ENCODE measurements at regions of chr15 and their contacts with region 1.

Region 1: GRCh38 chr15:56491110-56491722 is 26.3 kb upstream of the MNS1 start:
- DNase-seq: peak; percentile 55 to 96 (median 78)

Region 2: DNA sequence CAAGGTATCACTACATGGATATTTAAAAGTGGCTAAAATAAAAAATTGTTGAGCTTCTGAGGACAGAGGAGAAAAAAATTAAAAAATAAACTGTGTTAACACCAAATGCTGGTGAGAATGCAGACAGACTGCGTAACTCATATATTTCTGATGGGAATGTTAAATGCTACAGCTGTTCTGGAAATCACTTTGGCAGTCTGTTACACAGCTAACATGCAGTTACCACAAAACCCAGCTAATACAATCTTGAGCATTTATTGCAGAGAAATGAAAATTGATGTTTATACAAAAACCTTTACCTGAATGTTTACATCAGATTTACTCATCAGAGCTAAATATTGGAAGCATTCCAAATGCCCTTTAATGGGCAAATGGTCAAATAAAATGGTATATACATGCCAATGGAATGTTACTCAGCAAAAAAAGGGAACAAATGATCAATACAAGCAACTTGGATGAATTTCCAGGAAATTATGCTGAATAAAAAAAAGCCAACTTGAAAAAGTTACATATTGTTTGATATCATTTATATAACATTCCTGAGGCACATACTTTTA is 50.9 kb before region 1 on chr15:
- intact Hi-C with region 1: no loop called
- DNase-seq: no peak

Region 3: GRCh38 chr15:56587686-56588085 is 96.5 kb after region 1 on chr15:
- intact Hi-C with region 1: no loop called
- DNase-seq: no peak

Region 4: DNA sequence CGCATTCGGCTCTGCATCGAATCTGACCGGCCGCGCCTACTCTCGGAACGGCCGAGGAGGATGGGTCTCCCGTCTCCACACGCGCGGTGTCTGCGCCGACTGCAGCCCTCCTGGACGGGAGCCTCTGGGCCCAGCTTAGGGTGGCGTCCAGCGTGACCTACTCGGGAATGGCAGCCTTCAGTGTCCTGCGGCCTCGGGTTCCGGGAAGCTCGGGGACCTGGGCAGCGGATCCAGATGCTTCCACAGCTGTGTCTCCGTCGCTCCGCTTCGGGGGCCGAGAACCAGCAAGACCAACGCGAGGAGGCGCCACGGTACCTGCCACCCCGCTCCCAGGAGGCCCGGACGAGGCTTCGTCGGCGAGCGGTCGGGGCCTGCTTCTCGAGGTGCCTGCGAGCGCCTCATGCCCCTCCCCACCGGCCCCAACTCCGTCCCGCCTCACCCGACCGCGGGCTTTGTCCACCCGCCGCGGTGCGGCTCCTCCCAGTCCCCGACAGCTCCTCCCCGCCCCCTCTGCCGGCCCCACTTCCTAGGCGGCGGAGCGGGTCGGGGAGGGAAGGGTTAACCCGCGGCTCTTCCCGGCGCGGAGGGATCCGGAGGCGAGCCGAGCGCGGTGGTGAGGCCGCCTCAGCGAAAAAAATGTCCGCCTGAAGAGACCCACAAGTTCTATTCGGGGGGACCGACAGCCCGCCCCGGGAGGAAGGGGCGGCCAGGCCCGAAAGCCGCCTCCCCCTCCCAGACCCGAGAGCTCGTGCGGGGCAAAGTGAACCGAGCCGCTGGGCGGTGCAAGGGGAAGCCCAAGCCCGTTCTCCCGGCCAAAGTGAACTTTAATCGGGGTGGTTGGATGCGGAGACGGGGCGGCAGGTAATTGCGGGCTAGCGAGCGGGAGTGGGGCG is 427.1 kb after region 1 on chr15 and contains the start of gene TCF12:
- intact Hi-C with region 1: no loop called
- DNase-seq: peak; percentile 85 to 98 (median 89)

Region 5: GRCh38 chr15:57146506-57147201 is 655.4 kb after region 1 on chr15:
- intact Hi-C with region 1: loop called (anchors 10 kb)
- DNase-seq: no peak

Measured in posterior cingulate gyrus (tissue), 11 donors.